Aorta (tissue), 5 donors: ENCODE measurements at regions of chr14 and their contacts with region 1.

Region 1: GRCh38 chr14:58072288-58073071 is 79.5 kb downstream of the ARMH4 start:
- DNase-seq: no peak
- ATAC-seq: peak; percentile 91
- H3K4me3 ChIP-seq: no peak overlapping the region
- H3K27ac ChIP-seq: no peak overlapping the region
- H3K4me1 ChIP-seq: peaks cover 0 to 2% of the 10 kb centered on the region in 2 donors
- H3K27me3 ChIP-seq: no peaks in the 10 kb centered on the region

Region 2: GRCh38 chr14:57533214-57533613 is 539.3 kb before region 1 on chr14:
- intact Hi-C with region 1: loop called (anchors 1 to 2 kb)
- DNase-seq: no peak
- ATAC-seq: no peak
- H3K4me3 ChIP-seq: no peak overlapping the region
- H3K27ac ChIP-seq: no peak overlapping the region
- H3K4me1 ChIP-seq: no peaks in the 10 kb centered on the region
- H3K27me3 ChIP-seq: no peaks in the 10 kb centered on the region

Region 3: DNA sequence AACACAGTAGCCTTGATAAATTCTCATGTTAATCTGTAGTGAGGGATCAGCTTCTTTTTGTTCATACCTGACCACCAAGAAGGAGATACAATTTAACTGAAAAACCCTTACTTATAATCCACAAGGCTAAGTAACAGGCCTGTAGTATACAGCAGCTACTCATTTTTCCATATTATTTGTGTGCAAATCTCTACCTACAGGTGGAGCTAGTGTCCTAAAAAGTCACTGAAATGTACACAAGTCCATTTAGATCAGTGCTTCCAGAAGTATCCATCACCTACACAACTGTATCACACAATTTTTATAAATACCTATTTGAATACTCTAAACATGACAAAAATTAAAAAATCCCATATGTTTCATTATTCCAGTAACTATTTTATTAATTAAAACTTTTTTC is 379.8 kb before region 1 on chr14:
- intact Hi-C with region 1: loop called (anchors 5 kb)
- DNase-seq: no peak
- ATAC-seq: no peak
- H3K4me3 ChIP-seq: no peak overlapping the region
- H3K27ac ChIP-seq: no peak overlapping the region
- H3K4me1 ChIP-seq: no peaks in the 10 kb centered on the region
- H3K27me3 ChIP-seq: no peaks in the 10 kb centered on the region

Region 4: DNA sequence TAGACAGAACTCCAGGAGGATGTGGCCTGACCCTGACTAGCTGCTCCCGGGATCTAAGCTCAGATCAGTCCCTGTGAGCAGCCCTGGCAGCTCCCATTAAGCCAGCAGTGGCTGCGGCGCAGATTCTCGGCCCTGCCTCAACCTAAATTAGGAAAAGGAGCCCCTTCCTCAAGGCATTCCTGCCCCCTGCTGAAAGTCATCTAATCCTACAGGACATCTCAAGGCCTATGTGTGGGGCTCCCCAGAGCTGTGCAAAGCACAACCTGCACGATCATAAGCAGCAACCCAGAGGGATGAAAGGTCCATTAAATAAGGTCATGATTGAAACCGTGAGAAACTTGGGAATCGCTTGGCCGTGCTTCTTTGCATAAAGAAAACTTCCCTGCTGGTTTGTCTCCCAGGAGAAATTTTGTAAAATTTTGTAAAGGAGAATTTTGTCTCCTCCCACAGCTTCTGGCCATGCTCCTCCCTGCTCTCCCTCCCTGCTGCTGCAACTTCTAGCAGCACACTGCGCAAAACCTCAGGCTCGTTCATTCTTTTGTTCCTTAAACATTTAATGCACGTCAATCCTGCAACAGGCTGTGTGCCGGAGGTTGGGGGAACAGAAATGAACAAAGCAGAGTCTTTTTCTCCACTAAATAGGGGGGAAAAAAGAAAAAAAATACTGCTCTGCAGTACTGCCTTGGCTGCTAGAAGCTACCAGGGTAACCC is 110.0 kb before region 1 on chr14:
- intact Hi-C with region 1: loop called in 1 of 2 experiments (anchors 5 kb)
- DNase-seq: no peak
- ATAC-seq: peak; percentile 68
- H3K4me3 ChIP-seq: no peak overlapping the region
- H3K27ac ChIP-seq: peak overlapping the region; percentile 31 to 97
- H3K4me1 ChIP-seq: peaks cover 7 to 13% of the 10 kb centered on the region in 2 donors
- H3K27me3 ChIP-seq: no peaks in the 10 kb centered on the region

Region 5: GRCh38 chr14:58027909-58028308 is 44.6 kb before region 1 on chr14:
- intact Hi-C with region 1: no loop called
- DNase-seq: no peak
- ATAC-seq: no peak
- H3K4me3 ChIP-seq: no peak overlapping the region
- H3K27ac ChIP-seq: no peak overlapping the region
- H3K4me1 ChIP-seq: no peaks in the 10 kb centered on the region
- H3K27me3 ChIP-seq: no peaks in the 10 kb centered on the region